CD4-positive, alpha-beta memory T cell (primary cell): ENCODE measurements at regions of chr7 and their contacts with region 1.

Region 1: DNA sequence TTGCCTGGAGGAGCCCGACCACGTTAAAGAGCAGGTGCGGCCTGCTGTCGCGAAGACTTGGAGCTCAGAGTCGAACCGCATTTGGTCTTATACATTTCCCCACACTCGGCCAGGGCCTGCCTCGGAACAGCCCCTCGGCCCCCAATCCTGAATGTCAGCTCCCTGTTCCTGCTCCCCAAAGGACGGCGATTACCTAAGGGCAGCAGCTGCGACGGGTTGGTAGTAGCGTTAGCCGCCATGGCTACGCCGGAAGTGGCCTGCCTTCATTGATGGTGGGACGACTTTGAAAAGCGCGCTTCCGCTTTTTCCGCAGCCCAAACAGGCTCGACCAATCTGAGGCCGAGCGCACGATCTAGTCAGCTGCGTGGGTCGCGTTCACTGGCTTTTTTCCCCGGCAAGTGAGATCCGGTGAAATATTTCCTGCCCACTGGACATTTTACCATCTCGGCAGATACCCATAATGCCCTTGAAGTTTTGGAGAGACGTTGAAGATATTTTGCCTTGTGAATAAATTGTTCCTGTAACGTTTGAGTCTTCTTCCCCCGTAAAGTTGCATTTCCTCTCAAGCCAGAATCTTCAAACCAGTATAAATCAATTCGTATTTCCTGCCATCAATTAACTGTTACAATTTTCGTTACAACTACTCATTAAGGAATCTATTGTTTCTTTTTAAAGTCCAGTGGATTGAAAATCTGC is at the start of gene LSM5:
- DNase-seq: peak; percentile 89 to 92 (median 90)
- H3K4me3 ChIP-seq: peak within 1 kb of the TSS; percentile 67 to 96
- H3K4me3 Mint-ChIP-seq: peak within 1 kb of the TSS; percentile 82 to 96 (median 92)
- H3K27ac ChIP-seq: peak within 1 kb of the TSS; percentile 79
- H3K27ac Mint-ChIP-seq: peak within 1 kb of the TSS; percentile 92 to 97 (median 94)
- H3K4me1 ChIP-seq: peaks cover 27% of the 10 kb centered on the region
- H3K4me1 Mint-ChIP-seq: peaks cover 7 to 30% (median 22%) of the 10 kb centered on the region in 4 donors
- H3K27me3 ChIP-seq: no peaks in the 10 kb centered on the region
- H3K27me3 Mint-ChIP-seq: no peaks in the 10 kb centered on the region
- total RNA-seq, gene LSM5: 37.6 to 37.8 TPM

Region 2: DNA sequence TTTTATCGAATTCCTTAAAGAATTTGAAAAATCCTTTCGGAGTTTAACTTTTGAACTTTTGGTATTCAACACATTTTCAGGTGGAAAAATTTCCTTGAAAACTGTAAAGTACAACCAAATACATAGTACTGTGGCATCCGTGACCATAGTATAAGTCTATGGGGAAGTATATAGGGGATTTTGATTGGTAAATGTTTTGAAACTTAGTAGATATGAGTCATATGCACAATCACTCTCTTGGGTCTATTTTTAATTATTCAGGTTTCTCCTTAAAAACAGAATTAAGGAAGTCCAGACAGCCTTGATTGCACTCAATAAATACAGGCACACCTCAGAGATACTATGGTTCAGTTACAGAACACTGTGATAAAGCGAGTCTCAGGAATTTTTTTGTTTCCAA is 69.2 kb after region 1 on chr7:
- CTCF ChIA-PET with region 1: no interaction called
- POLR2A ChIA-PET with region 1: interaction called, 3 read pairs
- intact Hi-C with region 1: loop called (anchors 5 kb)
- DNase-seq: no peak
- H3K4me3 ChIP-seq: no peak overlapping the region
- H3K4me3 Mint-ChIP-seq: no peak overlapping the region
- H3K27ac ChIP-seq: no peak overlapping the region
- H3K27ac Mint-ChIP-seq: peak overlapping the region in 1 of 7 donors; percentile 41
- H3K4me1 ChIP-seq: no peaks in the 10 kb centered on the region
- H3K4me1 Mint-ChIP-seq: peaks cover 7 to 18% (median 12%) of the 10 kb centered on the region in 4 donors
- H3K27me3 ChIP-seq: no peaks in the 10 kb centered on the region
- H3K27me3 Mint-ChIP-seq: no peaks in the 10 kb centered on the region

Region 3: GRCh38 chr7:33040803-33041516 is 550.7 kb after region 1 on chr7:
- CTCF ChIA-PET with region 1: no interaction called
- POLR2A ChIA-PET with region 1: no interaction called
- intact Hi-C with region 1: loop called (anchors 5 kb)
- DNase-seq: peak; percentile 70 to 90 (median 81)
- H3K4me3 ChIP-seq: peak overlapping the region; percentile 6 to 52
- H3K4me3 Mint-ChIP-seq: peak overlapping the region; percentile 75 to 92 (median 84)
- H3K27ac ChIP-seq: peak overlapping the region; percentile 64
- H3K27ac Mint-ChIP-seq: peak overlapping the region; percentile 88 to 97 (median 94)
- H3K4me1 ChIP-seq: peaks cover 72% of the 10 kb centered on the region
- H3K4me1 Mint-ChIP-seq: peaks cover 34 to 71% (median 53%) of the 10 kb centered on the region in 4 donors
- H3K27me3 ChIP-seq: no peaks in the 10 kb centered on the region
- H3K27me3 Mint-ChIP-seq: no peaks in the 10 kb centered on the region

Region 4: GRCh38 chr7:33128990-33129805 is 638.9 kb after region 1 on chr7 and contains the start of gene BBS9:
- CTCF ChIA-PET with region 1: no interaction called
- POLR2A ChIA-PET with region 1: interaction called, 6 read pairs
- intact Hi-C with region 1: loop called (anchors 1 kb)
- DNase-seq: peak; percentile 89 to 93 (median 90)
- H3K4me3 ChIP-seq: peak within 1 kb of the TSS; percentile 74 to 81
- H3K4me3 Mint-ChIP-seq: peak within 1 kb of the TSS; percentile 96 to 98 (median 97)
- H3K27ac ChIP-seq: peak within 1 kb of the TSS; percentile 66
- H3K27ac Mint-ChIP-seq: peak within 1 kb of the TSS; percentile 88 to 97 (median 96)
- H3K4me1 ChIP-seq: peaks cover 15% of the 10 kb centered on the region
- H3K4me1 Mint-ChIP-seq: peaks cover 14 to 27% (median 15%) of the 10 kb centered on the region in 4 donors
- H3K27me3 ChIP-seq: no peaks in the 10 kb centered on the region
- H3K27me3 Mint-ChIP-seq: peaks cover 0 to 4% of the 10 kb centered on the region in 2 donors
- total RNA-seq, gene BBS9: 27.0 to 27.3 TPM